T-cell (primary cell): ENCODE measurements at regions of chr15 and their contacts with region 1.

Region 1: DNA sequence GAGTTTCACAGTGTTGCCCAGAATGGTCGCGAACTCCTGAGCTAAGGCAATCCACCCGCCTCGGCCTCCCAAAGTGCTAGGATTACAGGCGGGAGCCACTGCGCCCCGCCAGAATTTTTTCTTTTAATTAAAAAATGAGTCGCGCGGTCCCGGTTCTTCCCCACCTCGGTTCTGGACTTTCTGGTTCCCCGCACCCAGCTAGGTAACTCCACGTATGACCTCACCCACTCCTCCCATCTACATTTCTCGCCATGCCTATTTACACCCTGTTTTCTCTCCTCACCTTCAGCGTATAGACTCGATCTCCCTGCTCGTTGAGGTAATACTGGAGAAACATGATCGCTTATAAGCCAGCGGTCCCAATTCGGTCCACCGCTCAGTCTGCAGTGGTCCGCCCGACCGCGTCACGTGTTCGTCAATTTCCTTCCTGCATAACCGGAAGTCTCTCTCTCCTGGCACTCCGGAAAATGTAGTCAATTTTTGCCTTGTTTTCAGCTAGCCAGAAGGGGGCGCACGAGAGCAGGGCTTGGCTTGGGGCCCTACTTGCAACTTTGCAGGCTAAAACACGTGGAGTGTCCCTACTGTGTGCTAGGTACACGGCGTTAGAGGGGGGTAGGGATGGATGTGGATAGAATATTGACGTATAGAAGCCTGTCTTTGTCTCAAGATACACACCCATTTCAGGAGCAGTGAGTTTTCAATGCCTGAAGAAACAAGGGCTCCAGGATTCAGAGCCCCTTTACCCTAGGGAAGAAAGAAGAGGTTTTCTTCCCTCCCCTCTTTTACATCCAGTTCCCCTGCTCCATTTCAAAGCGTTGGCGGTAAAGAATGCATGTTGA is at the starts of genes NOP10 and NUTM1:
- DNase-seq: peak; percentile 78 to 96 (median 88)
- ATAC-seq: peak; percentile 85 to 89 (median 86)
- H3K4me3 ChIP-seq: peak within 1 kb of the TSS; percentile 69 to 92
- H3K4me3 Mint-ChIP-seq: no peak within 1 kb of the TSS
- H3K27ac ChIP-seq: peak within 1 kb of the TSS; percentile 64
- H3K27ac Mint-ChIP-seq: peak within 1 kb of the TSS; percentile 68 to 76
- H3K4me1 ChIP-seq: peaks cover 14 to 27% of the 10 kb centered on the region in 2 experiments
- H3K4me1 Mint-ChIP-seq: peaks cover 11 to 29% (median 28%) of the 10 kb centered on the region in 3 donors
- H3K27me3 ChIP-seq: no peaks in the 10 kb centered on the region
- H3K27me3 Mint-ChIP-seq: no peaks in the 10 kb centered on the region
- total RNA-seq, gene NOP10: 38.2 to 88.9 (median 68.8) TPM
- total RNA-seq, gene NUTM1: not detected

Region 2: GRCh38 chr15:33701305-33701698 is 641.7 kb before region 1 on chr15:
- CTCF ChIA-PET with region 1: no interaction called
- POLR2A ChIA-PET with region 1: no interaction called
- DNase-seq: no peak
- ATAC-seq: no peak
- H3K4me3 ChIP-seq: no peak overlapping the region
- H3K4me3 Mint-ChIP-seq: no peak overlapping the region
- H3K27ac ChIP-seq: no peak overlapping the region
- H3K27ac Mint-ChIP-seq: no peak overlapping the region
- H3K4me1 ChIP-seq: no peaks in the 10 kb centered on the region
- H3K4me1 Mint-ChIP-seq: peaks cover 0 to 4% (median 0%) of the 10 kb centered on the region in 3 donors
- H3K27me3 ChIP-seq: peaks cover 0 to 7% of the 10 kb centered on the region in 2 experiments
- H3K27me3 Mint-ChIP-seq: peaks cover 3 to 17% of the 10 kb centered on the region in 2 donors

Region 3: DNA sequence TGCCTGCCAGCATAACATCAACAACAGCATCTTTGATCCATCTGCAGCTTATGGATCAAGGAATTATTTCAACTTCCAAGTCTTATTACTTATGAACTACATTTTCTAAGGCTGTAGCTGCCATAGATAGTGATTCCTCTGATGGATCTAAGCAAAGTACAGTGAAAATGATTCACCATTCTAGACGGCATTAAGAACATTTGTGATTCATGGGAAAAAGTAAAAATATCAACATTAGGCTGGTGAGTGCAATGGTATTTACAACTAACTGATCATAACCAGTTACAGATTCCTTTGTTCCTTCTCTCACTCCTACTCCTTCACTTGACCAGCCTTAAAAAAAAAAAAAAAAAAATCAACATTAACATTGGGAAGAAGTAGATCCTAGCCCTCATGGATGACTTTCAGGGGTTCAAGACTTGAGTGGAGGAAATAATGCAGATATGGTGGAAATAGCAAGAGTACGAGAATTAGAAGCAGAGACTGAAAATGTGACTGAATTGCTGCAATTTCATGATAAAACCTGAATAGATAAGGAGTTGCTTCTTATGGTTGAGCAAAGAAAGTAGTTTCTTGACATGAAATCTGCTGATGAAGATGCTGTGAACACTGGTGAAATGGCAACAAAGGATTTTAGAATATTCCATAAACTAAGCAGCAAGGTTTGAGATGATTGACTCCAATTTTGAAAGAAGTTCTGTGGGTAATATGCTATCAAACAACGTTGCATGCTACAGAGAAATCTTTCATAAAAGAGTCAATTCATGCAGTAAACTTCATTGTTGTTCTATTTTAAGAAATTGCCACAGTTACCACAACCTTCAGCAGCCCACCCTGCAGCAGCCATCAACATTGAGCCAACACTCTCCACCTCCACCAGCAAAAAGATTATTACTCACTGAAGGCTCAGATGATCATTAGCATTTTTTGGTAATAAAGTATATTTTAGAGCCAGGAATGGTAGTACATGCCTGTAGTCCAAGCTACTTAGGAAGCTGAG is 28.2 kb before region 1 on chr15:
- CTCF ChIA-PET with region 1: no interaction called
- POLR2A ChIA-PET with region 1: no interaction called
- DNase-seq: no peak
- ATAC-seq: no peak
- H3K4me3 ChIP-seq: no peak overlapping the region
- H3K4me3 Mint-ChIP-seq: peak overlapping the region in 2 of 3 donors; percentile 43 to 51
- H3K27ac ChIP-seq: no peak overlapping the region
- H3K27ac Mint-ChIP-seq: peak overlapping the region; percentile 19 to 48
- H3K4me1 ChIP-seq: peaks cover 13 to 23% of the 10 kb centered on the region in 2 experiments
- H3K4me1 Mint-ChIP-seq: peaks cover 65 to 66% (median 66%) of the 10 kb centered on the region in 3 donors
- H3K27me3 ChIP-seq: no peaks in the 10 kb centered on the region
- H3K27me3 Mint-ChIP-seq: no peaks in the 10 kb centered on the region

Region 4: GRCh38 chr15:34327906-34328305 is 15.1 kb before region 1 on chr15:
- CTCF ChIA-PET with region 1: interaction called, 5 to 10 read pairs
- POLR2A ChIA-PET with region 1: interaction called, 5 to 8 read pairs
- DNase-seq: no peak
- ATAC-seq: peak in 1 of 4 experiments; percentile 27
- H3K4me3 ChIP-seq: peak overlapping the region in 1 of 2 donors; percentile 18
- H3K4me3 Mint-ChIP-seq: peak overlapping the region; percentile 32 to 61 (median 56)
- H3K27ac ChIP-seq: peak overlapping the region; percentile 53
- H3K27ac Mint-ChIP-seq: peak overlapping the region; percentile 87 to 96
- H3K4me1 ChIP-seq: peaks cover 32 to 37% of the 10 kb centered on the region in 2 experiments
- H3K4me1 Mint-ChIP-seq: peaks cover 65 to 75% (median 69%) of the 10 kb centered on the region in 3 donors
- H3K27me3 ChIP-seq: no peaks in the 10 kb centered on the region
- H3K27me3 Mint-ChIP-seq: no peaks in the 10 kb centered on the region

Region 5: GRCh38 chr15:34361278-34361677 is 18.3 kb after region 1 on chr15:
- CTCF ChIA-PET with region 1: interaction called, 3 to 24 read pairs
- POLR2A ChIA-PET with region 1: interaction called, 5 to 14 read pairs
- DNase-seq: no peak
- ATAC-seq: no peak
- H3K4me3 ChIP-seq: no peak overlapping the region
- H3K4me3 Mint-ChIP-seq: no peak overlapping the region
- H3K27ac ChIP-seq: no peak overlapping the region
- H3K27ac Mint-ChIP-seq: no peak overlapping the region
- H3K4me1 ChIP-seq: peaks cover 5 to 20% of the 10 kb centered on the region in 2 experiments
- H3K4me1 Mint-ChIP-seq: peaks cover 18 to 27% (median 22%) of the 10 kb centered on the region in 3 donors
- H3K27me3 ChIP-seq: no peaks in the 10 kb centered on the region
- H3K27me3 Mint-ChIP-seq: no peaks in the 10 kb centered on the region

Region 6: GRCh38 chr15:34490417-34491193 is 147.6 kb after region 1 on chr15:
- CTCF ChIA-PET with region 1: no interaction called
- POLR2A ChIA-PET with region 1: no interaction called
- DNase-seq: no peak
- ATAC-seq: no peak
- H3K4me3 ChIP-seq: no peak overlapping the region
- H3K4me3 Mint-ChIP-seq: peak overlapping the region in 1 of 3 donors; percentile 18
- H3K27ac ChIP-seq: no peak overlapping the region
- H3K27ac Mint-ChIP-seq: no peak overlapping the region
- H3K4me1 ChIP-seq: no peaks in the 10 kb centered on the region
- H3K4me1 Mint-ChIP-seq: peaks cover 5 to 10% (median 9%) of the 10 kb centered on the region in 3 donors
- H3K27me3 ChIP-seq: peaks cover 8 to 39% of the 10 kb centered on the region in 2 experiments
- H3K27me3 Mint-ChIP-seq: peaks cover 60 to 73% of the 10 kb centered on the region in 2 donors

Region 7: GRCh38 chr15:34514251-34514670 is 171.3 kb after region 1 on chr15:
- CTCF ChIA-PET with region 1: no interaction called
- POLR2A ChIA-PET with region 1: interaction called in 1 of 2 experiments, 16 read pairs
- DNase-seq: peak in 3 of 35 experiments; percentile 5 to 10 (median 8)
- ATAC-seq: peak; percentile 50 to 61 (median 54)
- H3K4me3 ChIP-seq: peak overlapping the region; percentile 60 to 78
- H3K4me3 Mint-ChIP-seq: peak overlapping the region; percentile 66 to 82 (median 75)
- H3K27ac ChIP-seq: no peak overlapping the region
- H3K27ac Mint-ChIP-seq: no peak overlapping the region
- H3K4me1 ChIP-seq: peaks cover 0 to 14% of the 10 kb centered on the region in 2 experiments
- H3K4me1 Mint-ChIP-seq: peaks cover 9 to 21% (median 21%) of the 10 kb centered on the region in 3 donors
- H3K27me3 ChIP-seq: peaks cover 15 to 32% of the 10 kb centered on the region in 2 experiments
- H3K27me3 Mint-ChIP-seq: peaks cover 47 to 58% of the 10 kb centered on the region in 2 donors